Cardiac septum (tissue), 1 donor: ENCODE measurements at regions of chr20 and their contacts with region 1.

Region 1: DNA sequence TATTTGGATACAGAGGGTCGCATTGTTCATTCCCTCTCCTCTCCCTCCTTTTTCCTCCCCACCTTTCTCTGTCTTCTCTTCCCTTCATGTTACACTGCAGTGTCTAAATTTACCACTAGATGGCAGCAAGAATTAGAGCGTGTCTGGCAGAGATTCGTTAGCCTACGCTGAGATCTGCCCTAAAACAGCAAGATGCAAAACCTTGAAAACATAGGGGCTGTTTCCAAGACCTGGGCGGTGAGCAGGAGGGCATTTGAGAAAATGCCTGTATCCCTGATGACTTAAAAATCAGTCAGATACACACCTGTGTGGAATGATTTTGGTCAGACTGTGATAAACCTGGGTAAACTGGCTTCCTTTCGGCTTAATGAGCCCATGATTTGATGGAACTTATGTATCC is 101.5 kb upstream of the ISM1 start:
- DNase-seq: no peak

Region 2: DNA sequence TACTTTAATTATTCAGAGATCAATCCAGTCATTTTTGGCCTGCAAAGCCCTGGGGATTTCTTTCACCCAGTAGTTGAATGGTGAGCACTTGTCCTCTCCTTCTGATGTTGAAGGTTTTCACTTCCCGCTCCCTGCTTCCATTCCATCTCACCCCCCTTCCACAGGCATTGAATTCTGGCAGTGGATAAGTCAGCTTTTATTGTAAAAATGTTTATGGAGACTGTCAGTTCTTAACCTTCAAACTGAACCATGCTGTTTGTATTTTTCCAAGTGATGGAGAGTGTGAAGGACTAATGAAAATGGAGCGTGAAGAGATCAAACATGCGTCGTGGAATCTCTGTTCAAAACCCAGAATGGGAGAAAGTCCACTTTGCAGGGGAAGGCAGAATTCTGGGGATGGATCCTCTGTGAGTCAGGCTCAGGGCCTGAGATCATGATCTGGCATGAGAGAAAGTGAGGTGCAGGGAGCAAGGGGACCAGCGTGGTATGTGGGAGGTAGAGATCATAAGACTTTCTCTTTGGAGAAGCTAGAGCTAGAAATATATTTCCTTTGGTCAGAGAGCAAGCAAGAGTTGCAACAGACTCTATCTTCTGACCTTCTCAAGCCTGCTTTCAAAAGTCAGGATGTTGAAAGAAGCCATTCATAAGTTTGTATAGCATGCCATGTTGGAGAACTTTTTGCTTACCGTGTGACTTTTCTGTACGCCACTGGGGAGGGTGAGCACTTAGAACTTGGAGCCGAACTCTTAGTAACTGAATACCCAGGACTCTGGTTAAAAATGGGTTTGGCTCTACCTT is 131.7 kb after region 1 on chr20:
- intact Hi-C with region 1: no loop called
- DNase-seq: no peak

Region 3: DNA sequence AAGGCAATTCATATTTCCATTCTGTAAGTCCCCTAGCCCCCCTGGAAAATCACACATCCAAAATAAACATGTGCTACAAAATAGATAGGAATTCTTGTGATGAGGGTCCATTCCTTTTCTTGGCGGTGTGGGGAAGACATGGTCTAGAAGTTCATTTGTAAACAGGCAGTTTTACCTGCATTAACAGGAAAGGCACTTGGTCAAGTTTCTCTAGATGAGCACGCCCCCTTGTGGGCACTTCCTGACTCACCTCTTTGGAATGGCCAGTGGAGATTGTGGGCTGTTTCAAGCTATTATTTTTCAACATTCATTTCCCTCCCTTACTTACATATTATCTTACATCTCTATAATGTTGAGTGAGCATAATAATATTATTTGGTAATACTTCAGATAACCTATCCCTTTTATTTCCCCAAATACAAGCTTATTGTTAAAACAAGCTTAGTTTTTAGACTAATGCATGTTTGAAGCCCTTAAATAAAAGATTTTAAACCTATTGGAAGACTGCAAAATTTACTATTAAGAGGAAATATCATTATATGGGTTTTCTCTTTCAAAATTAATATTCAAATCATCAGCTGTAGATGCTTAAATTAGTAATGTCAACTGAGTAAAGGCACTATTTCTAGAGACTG is 427.0 kb after region 1 on chr20:
- intact Hi-C with region 1: loop called (anchors 5 kb)
- DNase-seq: no peak

Region 4: DNA sequence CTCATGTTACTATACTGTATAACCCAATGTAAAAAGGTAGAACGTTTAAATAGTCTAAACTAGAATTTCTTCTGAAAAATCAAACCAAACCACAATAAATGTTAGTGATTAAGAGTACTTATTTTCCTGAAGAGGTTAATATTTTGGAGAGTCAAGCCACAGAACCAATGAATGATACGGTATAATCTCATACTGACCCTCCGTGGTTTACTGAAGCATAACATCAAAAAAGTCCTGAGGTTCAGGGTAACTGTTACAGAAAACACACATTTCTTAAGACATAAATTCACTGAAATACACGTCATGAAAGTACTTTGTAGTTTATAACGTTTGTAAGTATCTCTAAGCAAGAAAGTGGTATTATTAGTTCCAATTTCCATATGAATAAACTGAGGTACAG is 636.2 kb after region 1 on chr20:
- intact Hi-C with region 1: loop called (anchors 5 kb)
- DNase-seq: no peak

Region 5: GRCh38 chr20:13771853-13772453 is 652.4 kb after region 1 on chr20:
- intact Hi-C with region 1: loop called (anchors 2 kb)
- DNase-seq: no peak